AG04450 (cell line): ENCODE measurements at regions of chr3 and their contacts with region 1.

Region 1: GRCh38 chr3:190012314-190012782 is 108.3 kb downstream of the P3H2 start:
- DNase-seq: no peak
- H3K4me3 ChIP-seq: no peak overlapping the region
- H3K27ac ChIP-seq: peak overlapping the region; percentile 3
- H3K27me3 ChIP-seq: no peaks in the 10 kb centered on the region
- CTCF ChIP-seq: no peak

Region 2: GRCh38 chr3:189975391-189975990 is 36.9 kb before region 1 on chr3:
- CTCF ChIA-PET with region 1: no interaction called
- POLR2A ChIA-PET with region 1: no interaction called
- DNase-seq: no peak
- H3K4me3 ChIP-seq: no peak overlapping the region
- H3K27ac ChIP-seq: no peak overlapping the region
- H3K27me3 ChIP-seq: no peaks in the 10 kb centered on the region
- CTCF ChIP-seq: no peak

Region 3: GRCh38 chr3:190038050-190038933 is 25.9 kb after region 1 on chr3:
- CTCF ChIA-PET with region 1: interaction called, 3 read pairs
- POLR2A ChIA-PET with region 1: interaction called, 10 read pairs
- DNase-seq: peak; percentile 42
- H3K4me3 ChIP-seq: no peak overlapping the region
- H3K27ac ChIP-seq: no peak overlapping the region
- H3K27me3 ChIP-seq: no peaks in the 10 kb centered on the region
- CTCF ChIP-seq: no peak

Region 4: DNA sequence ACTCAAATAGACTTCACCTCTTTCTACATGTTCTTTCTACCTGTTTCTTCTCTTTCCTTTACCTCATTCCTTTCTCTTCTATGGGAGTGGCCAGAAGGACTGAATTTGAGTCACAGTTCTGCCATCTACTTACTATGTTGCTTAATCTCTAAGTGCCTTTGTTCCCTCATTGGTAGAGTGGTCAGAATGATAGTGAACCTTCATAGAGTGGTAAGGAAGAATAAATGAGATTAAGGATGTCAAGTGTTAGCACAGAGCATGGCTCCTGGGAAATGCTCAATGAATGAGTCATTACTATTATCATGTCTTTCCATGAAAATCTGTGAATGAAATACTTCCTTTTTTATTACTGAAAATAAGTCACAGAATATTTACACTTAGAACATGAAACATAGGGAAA is 419.9 kb after region 1 on chr3:
- CTCF ChIA-PET with region 1: no interaction called
- POLR2A ChIA-PET with region 1: no interaction called
- DNase-seq: no peak
- H3K4me3 ChIP-seq: no peak overlapping the region
- H3K27ac ChIP-seq: no peak overlapping the region
- H3K27me3 ChIP-seq: no peaks in the 10 kb centered on the region
- CTCF ChIP-seq: no peak